Aorta (tissue), 5 donors: ENCODE measurements at regions of chr22 and their contacts with region 1.

Region 1: DNA sequence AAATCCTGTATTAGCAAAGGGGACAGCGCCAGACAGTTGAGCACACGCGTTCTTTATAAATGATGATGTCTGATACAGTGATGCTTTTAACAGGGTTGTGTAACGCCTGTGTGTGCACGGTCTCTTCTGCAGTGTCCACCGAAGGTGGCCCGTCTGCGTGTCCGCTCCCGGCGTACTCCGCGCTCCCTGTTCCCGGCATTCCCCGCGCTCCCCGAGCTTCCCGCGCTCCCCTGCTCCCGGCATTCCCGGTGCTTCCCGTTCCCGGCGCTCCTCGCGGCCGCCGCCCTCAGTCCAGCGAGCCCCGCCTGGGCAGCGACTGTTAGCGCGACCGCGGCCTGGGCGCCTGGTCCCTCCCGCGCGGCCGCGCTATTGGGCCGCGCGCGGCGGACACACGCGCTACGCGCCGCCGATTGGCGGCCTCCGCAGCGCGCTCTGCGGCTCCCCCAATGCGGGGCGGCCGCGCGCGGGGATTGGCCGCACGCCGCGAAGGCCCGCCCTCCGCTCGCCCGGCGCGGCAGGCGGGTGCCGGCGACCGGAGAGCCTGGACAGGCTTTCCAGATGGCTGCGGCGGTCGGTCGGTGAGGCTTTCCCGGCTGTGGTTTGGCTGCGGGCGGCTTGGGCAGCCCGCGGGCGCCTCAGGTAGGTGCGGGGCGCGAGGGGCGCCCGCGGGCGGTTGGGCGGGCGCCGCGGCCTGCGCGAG is at the start of gene DGCR8:
- DNase-seq: peak; percentile 95 to 97
- ATAC-seq: peak; percentile 96
- H3K4me3 ChIP-seq: peak within 1 kb of the TSS; percentile 68 to 91
- H3K27ac ChIP-seq: peak within 1 kb of the TSS; percentile 46 to 60
- H3K4me1 ChIP-seq: no peaks in the 10 kb centered on the region
- H3K27me3 ChIP-seq: no peaks in the 10 kb centered on the region
- total RNA-seq, gene DGCR8: 31.9 to 43.9 TPM

Region 2: DNA sequence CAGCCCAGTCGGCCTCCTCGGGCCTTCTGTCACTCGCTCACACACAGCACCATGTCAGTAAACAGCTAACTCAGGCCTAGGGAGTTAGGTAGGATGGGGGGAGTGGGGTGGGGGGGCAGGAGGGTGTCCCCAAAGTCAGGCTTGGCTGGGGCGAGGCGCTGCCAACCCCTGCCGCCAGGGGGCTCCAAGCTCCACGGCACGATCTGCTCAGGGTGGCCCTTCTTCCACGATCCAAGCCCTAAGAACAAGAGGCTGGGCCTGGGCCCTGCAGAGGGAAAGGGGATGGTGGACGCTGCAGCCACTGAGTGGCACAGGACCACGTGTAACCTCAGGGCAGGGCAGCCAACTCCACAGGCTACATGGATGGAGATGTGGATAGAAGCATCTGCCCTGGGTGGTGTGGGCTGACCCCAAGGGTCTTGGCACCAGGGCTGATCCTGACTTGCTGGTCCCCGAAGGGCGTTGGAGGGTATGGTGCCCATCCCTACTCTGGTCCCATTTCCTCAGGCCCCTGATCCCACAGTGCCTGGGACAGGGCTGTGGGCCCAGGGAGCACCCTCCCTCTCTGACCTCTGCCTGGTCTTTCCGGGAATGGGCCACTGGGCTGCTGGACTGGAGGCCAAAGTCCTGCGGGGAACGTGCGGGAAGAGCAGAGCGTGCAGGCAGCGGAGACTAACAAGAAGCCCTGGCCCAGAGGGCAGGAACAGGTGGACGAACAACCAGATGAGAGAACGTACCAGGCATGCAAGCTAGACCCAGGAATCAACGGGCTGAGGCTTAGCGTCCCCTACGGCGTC is 109.2 kb before region 1 on chr22:
- intact Hi-C with region 1: loop called in 1 of 2 experiments (anchors 10 kb)
- DNase-seq: peak; percentile 76 to 92
- ATAC-seq: peak; percentile 80
- H3K4me3 ChIP-seq: no peak overlapping the region
- H3K27ac ChIP-seq: no peak overlapping the region
- H3K4me1 ChIP-seq: no peaks in the 10 kb centered on the region
- H3K27me3 ChIP-seq: no peaks in the 10 kb centered on the region

Region 3: GRCh38 chr22:19986410-19987341 is 93.2 kb before region 1 on chr22:
- intact Hi-C with region 1: no loop called
- DNase-seq: peak; percentile 86 to 94
- ATAC-seq: peak; percentile 81
- H3K4me3 ChIP-seq: peak overlapping the region; percentile 49 to 69
- H3K27ac ChIP-seq: peak overlapping the region; percentile 84 to 91
- H3K4me1 ChIP-seq: no peaks in the 10 kb centered on the region
- H3K27me3 ChIP-seq: no peaks in the 10 kb centered on the region

Region 4: GRCh38 chr22:20020533-20021195 is 59.2 kb before region 1 on chr22 and contains the start of gene TANGO2:
- intact Hi-C with region 1: loop called in 1 of 2 experiments (anchors 2 kb)
- DNase-seq: peak; percentile 94 to 97
- ATAC-seq: peak; percentile 92
- H3K4me3 ChIP-seq: peak within 1 kb of the TSS; percentile 76 to 91
- H3K27ac ChIP-seq: peak within 1 kb of the TSS in 1 of 2 donors; percentile 82
- H3K4me1 ChIP-seq: no peaks in the 10 kb centered on the region
- H3K27me3 ChIP-seq: no peaks in the 10 kb centered on the region
- total RNA-seq, gene TANGO2: 35.2 to 45.3 TPM

Region 5: GRCh38 chr22:20116951-20117645 is 37.2 kb after region 1 on chr22 and contains the start of gene TRMT2A:
- intact Hi-C with region 1: loop called (anchors 2 to 5 kb)
- DNase-seq: peak; percentile 99 to 100
- ATAC-seq: peak; percentile 96
- H3K4me3 ChIP-seq: peak within 1 kb of the TSS; percentile 65 to 75
- H3K27ac ChIP-seq: peak within 1 kb of the TSS in 1 of 2 donors; percentile 60
- H3K4me1 ChIP-seq: no peaks in the 10 kb centered on the region
- H3K27me3 ChIP-seq: no peaks in the 10 kb centered on the region
- total RNA-seq, gene TRMT2A: 42.5 to 49.8 TPM